Naive thymus-derived CD4-positive, alpha-beta T cell (primary cell): ENCODE measurements at regions of chr16 and their contacts with region 1.

Region 1: DNA sequence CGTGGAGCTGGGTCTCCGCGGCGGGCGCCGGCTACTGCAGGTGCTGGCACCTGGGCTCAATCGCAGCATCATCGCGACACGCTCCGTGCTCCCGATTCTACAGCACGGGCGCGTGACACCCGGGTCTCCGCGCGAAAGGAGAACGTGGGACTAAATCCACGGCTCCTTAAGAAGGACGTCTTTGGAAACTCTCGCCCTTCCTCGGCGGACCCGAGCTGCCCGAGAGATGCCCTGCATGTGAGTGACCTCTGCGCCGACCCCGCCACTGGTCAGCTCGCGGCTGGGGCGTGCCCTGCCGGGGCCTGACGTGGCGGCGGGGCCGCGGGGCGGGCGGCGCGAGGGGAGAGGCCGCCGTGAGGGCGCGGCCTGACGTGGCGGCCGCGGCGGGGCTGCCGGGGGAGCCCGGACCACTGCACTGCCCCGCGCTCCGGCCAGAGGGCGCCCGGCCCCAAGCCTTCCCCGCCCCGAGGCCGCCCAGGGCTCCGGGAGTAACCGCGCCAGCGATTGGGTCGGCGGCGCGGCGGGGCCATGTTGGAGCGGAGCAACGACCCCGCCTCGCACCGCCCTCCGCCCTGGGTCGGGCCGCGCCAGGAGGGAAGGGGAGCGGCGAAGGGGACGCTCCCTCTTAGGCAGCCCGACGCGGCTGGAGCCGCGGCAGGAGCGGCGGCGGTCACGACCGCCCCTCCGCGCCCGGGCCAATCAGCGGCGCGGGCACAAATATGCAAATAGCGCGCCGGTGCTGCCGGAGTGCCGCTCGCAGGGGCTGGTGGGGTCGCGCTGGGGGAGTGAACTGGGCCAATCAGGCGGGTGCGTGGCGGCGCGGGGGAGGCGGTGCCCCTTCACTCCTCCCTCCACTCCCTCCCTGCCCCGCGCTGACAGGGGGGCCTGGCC is 75.6 kb downstream of the CHD9 start:
- DNase-seq: peak; percentile 93 to 96 (median 95)
- ATAC-seq: peak; percentile 94
- H3K4me3 ChIP-seq: peak overlapping the region; percentile 77
- H3K4me3 Mint-ChIP-seq: peak overlapping the region; percentile 69 to 94 (median 84)
- H3K27ac ChIP-seq: peak overlapping the region; percentile 73
- H3K27ac Mint-ChIP-seq: peak overlapping the region; percentile 57 to 90 (median 79)
- H3K4me1 ChIP-seq: peaks cover 0 to 4% of the 10 kb centered on the region in 2 donors
- H3K4me1 Mint-ChIP-seq: peaks cover 6 to 29% (median 12%) of the 10 kb centered on the region in 7 donors
- H3K27me3 ChIP-seq: no peaks in the 10 kb centered on the region
- H3K27me3 Mint-ChIP-seq: peaks cover 0 to 6% (median 0%) of the 10 kb centered on the region in 5 donors

Region 2: GRCh38 chr16:53099318-53100130 is 30.9 kb before region 1 on chr16:
- CTCF ChIA-PET with region 1: no interaction called
- POLR2A ChIA-PET with region 1: no interaction called
- intact Hi-C with region 1: loop called (anchors 1 to 2 kb)
- DNase-seq: peak; percentile 4 to 65 (median 13)
- ATAC-seq: peak; percentile 68
- H3K4me3 ChIP-seq: peak overlapping the region; percentile 60
- H3K4me3 Mint-ChIP-seq: peak overlapping the region; percentile 79 to 96 (median 87)
- H3K27ac ChIP-seq: peak overlapping the region; percentile 29
- H3K27ac Mint-ChIP-seq: peak overlapping the region; percentile 12 to 91 (median 70)
- H3K4me1 ChIP-seq: peaks cover 11 to 24% of the 10 kb centered on the region in 2 donors
- H3K4me1 Mint-ChIP-seq: peaks cover 10 to 27% (median 17%) of the 10 kb centered on the region in 7 donors
- H3K27me3 ChIP-seq: no peaks in the 10 kb centered on the region
- H3K27me3 Mint-ChIP-seq: no peaks in the 10 kb centered on the region

Region 3: DNA sequence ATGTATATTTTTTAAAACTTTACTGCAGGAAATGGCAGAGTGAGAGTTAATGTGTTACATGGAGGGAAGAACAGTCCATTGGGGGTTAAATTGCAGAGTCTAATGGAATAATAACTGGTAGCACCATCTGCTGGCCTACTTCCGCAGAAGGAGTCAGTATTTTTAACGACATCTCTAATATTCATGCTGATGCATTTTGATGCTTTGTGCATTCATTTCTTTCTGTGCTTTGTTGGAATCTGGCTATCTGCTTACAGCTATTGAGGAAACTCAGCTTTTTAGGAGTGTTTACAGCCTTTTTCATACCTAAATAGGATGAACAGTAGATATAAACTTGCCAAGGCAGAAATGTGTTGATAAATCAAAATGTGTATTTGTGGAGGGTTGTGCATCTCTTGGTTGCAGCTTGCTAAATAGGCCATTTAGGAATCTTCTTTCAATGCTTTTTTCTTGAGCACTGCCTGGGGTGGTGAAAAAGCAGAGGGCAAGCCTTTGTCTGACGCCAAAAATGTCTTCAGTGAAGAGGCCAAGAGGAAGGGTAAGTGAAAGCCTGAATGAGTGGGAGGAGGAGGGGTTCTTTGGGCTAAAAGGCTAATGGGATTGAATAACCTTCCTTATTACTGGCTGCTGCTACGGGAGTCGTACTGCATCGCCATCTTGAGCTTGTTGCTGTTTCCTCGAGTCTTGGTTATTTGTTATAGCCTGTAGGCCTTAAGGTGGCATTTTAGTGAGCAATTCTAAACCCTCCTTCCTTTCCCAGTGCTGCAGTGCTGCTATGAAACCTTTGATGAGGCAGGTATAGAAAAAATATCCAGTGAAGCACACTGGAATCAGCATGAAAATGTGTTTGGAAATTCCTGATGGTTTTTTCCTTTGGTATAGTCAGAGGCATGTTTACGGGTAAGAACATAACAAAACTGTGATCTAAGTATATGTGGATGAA is 77.7 kb after region 1 on chr16:
- CTCF ChIA-PET with region 1: no interaction called
- POLR2A ChIA-PET with region 1: no interaction called
- intact Hi-C with region 1: loop called (anchors 1 to 2 kb)
- DNase-seq: peak in 5 of 9 donors; percentile 5 to 27 (median 17)
- ATAC-seq: peak; percentile 89
- H3K4me3 ChIP-seq: no peak overlapping the region
- H3K4me3 Mint-ChIP-seq: peak overlapping the region; percentile 24 to 85 (median 72)
- H3K27ac ChIP-seq: no peak overlapping the region
- H3K27ac Mint-ChIP-seq: peak overlapping the region; percentile 51 to 90 (median 81)
- H3K4me1 ChIP-seq: peaks cover 0 to 7% of the 10 kb centered on the region in 2 donors
- H3K4me1 Mint-ChIP-seq: peaks cover 16 to 36% (median 30%) of the 10 kb centered on the region in 7 donors
- H3K27me3 ChIP-seq: no peaks in the 10 kb centered on the region
- H3K27me3 Mint-ChIP-seq: no peaks in the 10 kb centered on the region

Region 4: DNA sequence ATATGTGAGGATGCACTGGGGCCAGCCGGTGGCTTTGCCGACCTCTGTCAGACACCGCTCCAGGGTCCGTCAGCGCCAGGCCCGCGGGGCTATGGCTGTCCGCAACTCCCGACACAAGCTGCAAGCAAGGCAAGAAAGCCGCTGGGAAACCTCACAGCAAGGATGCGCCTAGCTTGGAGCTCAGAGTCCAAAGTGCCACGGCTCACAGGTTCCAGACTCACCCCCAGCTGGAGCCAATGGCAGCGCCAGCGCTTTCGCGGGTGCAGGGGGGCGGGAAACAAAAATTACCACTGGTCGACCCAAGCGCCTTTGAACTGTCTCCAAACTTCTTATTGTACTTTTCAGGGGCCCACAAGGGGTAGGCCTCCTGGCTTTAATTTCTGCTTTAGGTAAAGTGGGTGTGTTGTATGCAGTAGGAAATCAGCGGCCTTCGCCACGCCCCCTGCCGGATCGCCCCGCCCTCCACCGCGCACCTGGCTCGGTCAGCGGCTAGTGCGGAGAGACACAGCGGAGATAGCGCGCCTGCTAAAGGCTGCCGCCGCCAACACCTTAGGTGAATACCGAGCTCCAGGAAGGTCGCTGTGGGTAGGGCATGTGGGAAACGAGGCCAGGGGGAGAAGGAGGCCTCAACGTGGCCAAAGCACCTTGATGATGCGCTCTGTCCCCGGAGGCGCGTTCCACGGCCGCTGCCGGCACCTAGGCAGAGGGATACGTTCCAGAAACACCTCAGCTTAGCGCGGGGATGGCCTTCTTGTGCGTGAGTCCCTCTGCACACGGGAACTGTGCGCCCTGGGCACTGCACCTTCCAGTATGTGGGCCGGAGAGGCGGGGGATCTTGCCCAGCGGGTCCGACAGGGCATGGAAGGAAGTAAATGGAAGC is 242.8 kb after region 1 on chr16:
- CTCF ChIA-PET with region 1: no interaction called
- POLR2A ChIA-PET with region 1: no interaction called
- intact Hi-C with region 1: loop called (anchors 5 kb)
- DNase-seq: peak; percentile 64 to 87 (median 84)
- ATAC-seq: peak; percentile 96
- H3K4me3 ChIP-seq: peak overlapping the region; percentile 84
- H3K4me3 Mint-ChIP-seq: peak overlapping the region in 1 of 10 donors; percentile 86
- H3K27ac ChIP-seq: peak overlapping the region; percentile 67
- H3K27ac Mint-ChIP-seq: peak overlapping the region in 8 of 9 donors; percentile 48 to 95 (median 88)
- H3K4me1 ChIP-seq: peaks cover 4 to 7% of the 10 kb centered on the region in 2 donors
- H3K4me1 Mint-ChIP-seq: peaks cover 11 to 44% (median 20%) of the 10 kb centered on the region in 7 donors
- H3K27me3 ChIP-seq: no peaks in the 10 kb centered on the region
- H3K27me3 Mint-ChIP-seq: peaks cover 0 to 32% (median 0%) of the 10 kb centered on the region in 5 donors

Region 5: GRCh38 chr16:53503270-53503923 is 373.0 kb after region 1 on chr16:
- CTCF ChIA-PET with region 1: no interaction called
- POLR2A ChIA-PET with region 1: interaction called, 3 read pairs
- intact Hi-C with region 1: loop called (anchors 1 kb)
- DNase-seq: peak; percentile 94 to 100 (median 100)
- ATAC-seq: peak; percentile 94
- H3K4me3 ChIP-seq: peak overlapping the region; percentile 66
- H3K4me3 Mint-ChIP-seq: peak overlapping the region; percentile 86 to 97 (median 94)
- H3K27ac ChIP-seq: peak overlapping the region; percentile 79
- H3K27ac Mint-ChIP-seq: peak overlapping the region; percentile 82 to 98 (median 92)
- H3K4me1 ChIP-seq: peaks cover 25 to 38% of the 10 kb centered on the region in 2 donors
- H3K4me1 Mint-ChIP-seq: peaks cover 36 to 54% (median 45%) of the 10 kb centered on the region in 7 donors
- H3K27me3 ChIP-seq: no peaks in the 10 kb centered on the region
- H3K27me3 Mint-ChIP-seq: no peaks in the 10 kb centered on the region

Region 6: DNA sequence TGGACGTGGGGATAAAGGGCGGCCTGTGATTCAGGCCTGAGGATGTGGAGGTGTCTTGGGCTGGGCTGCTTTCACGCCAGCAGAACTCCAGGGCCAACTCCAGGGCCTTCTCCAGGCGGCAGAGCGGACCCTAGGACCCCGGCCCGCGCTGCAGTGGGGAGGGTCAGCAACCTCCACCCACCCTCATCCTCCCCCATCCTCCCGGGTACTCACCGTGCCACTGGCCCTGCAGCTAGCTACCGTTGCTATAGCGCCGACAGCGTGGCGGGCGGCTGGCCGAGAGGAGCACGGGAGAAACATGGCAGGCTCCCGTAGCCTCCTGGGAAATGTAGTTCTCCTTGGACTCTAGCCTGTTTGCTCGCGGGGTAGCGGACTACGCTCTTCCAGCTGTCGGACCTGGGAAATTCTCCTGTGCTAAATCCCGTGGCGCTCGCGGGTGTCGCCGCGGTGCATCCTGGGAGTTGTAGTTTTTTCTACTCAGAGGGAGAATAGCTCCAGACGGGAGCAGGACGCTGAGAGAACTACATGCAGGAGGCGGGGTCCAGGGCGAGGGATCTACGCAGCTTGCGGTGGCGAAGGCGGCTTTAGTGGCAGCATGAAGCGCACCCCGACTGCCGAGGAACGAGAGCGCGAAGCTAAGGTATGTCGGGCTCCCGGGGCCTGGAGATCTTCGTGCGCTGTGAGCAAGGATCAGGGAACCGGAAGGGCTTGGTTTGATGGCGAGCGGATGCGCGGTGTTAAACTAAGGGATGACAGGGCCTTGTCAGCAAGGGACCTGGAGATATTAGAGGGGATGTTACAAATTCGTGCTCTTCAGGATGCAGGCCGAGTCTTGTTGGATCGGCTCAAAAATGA is 573.4 kb after region 1 on chr16 and contains the starts of genes FTO and RPGRIP1L:
- CTCF ChIA-PET with region 1: no interaction called
- POLR2A ChIA-PET with region 1: interaction called, 4 read pairs
- intact Hi-C with region 1: loop called (anchors 1 kb)
- DNase-seq: peak; percentile 85 to 97 (median 93)
- ATAC-seq: peak; percentile 95
- H3K4me3 ChIP-seq: peak within 1 kb of the TSS; percentile 78
- H3K4me3 Mint-ChIP-seq: peak within 1 kb of the TSS; percentile 85 to 100 (median 98)
- H3K27ac ChIP-seq: peak within 1 kb of the TSS; percentile 66
- H3K27ac Mint-ChIP-seq: peak within 1 kb of the TSS; percentile 90 to 99 (median 95)
- H3K4me1 ChIP-seq: peaks cover 15 to 16% of the 10 kb centered on the region in 2 donors
- H3K4me1 Mint-ChIP-seq: peaks cover 17 to 48% (median 42%) of the 10 kb centered on the region in 7 donors
- H3K27me3 ChIP-seq: no peaks in the 10 kb centered on the region
- H3K27me3 Mint-ChIP-seq: no peaks in the 10 kb centered on the region
- total RNA-seq, gene FTO: 47.2 to 63.5 (median 57.9) TPM
- total RNA-seq, gene RPGRIP1L: 2.0 to 6.1 (median 3.6) TPM